ENCODE measurements at regions of chr6 and their contacts with region 1.

Region 1: DNA sequence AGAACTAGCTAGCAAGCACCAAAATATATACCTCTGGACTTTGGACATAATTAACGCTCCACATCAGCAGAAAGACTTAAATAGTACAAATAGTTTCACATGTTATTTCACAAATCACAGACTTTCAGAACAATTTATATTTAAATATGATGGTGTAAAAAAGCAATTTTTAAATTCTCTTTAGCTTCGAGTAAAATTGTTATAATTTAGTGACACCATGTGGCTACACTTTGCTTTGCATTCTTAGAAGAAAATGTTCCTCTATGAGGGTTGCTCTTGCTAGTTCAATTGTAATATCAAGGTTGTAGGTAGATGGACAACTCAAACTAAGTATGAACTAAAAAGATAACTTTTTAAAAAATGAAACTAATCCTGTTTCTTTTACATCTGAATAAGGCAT is 69.0 kb downstream of the BTBD9 start:
- DNase-seq: no peak
- ATAC-seq: no peak
- H3K4me3 Mint-ChIP-seq: no peak overlapping the region
- H3K27ac Mint-ChIP-seq: no peak overlapping the region
- H3K4me1 Mint-ChIP-seq: peaks cover 18% of the 10 kb centered on the region
- H3K27me3 Mint-ChIP-seq: no peaks in the 10 kb centered on the region

Region 2: DNA sequence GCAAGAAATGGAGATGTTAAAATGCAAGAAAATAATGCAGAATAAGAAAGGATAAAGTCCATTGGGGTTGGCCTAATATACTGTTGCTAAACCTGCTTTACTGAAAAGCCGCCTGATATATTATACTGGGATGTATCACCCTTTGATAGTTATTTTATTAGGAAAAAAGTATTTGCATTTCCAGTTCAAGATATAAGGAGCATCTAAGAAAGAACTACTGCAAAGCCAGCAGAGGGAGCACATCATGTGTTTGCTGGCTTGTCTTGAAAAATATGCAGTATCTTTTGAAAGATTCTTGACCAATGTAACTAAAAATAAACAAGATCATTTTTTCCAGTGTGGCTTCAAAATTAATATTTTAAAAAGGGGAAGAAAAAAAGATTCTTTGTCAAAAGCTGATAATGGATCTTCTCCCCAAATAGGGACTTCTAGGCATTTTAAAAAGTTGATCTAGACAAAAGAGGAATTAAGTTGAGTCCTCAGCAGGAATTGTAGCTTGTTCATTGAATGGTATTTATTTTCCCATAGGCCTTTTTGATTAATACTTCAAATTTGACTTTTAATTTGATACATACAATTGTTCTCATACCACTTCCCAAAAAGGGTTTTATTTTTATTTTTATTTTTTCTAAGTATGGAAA is 536.4 kb before region 1 on chr6:
- CTCF ChIA-PET with region 1: interaction called, 16 read pairs
- POLR2A ChIA-PET with region 1: no interaction called
- DNase-seq: no peak
- ATAC-seq: no peak
- H3K4me3 Mint-ChIP-seq: no peak overlapping the region
- H3K27ac Mint-ChIP-seq: no peak overlapping the region
- H3K4me1 Mint-ChIP-seq: peaks cover 12% of the 10 kb centered on the region
- H3K27me3 Mint-ChIP-seq: no peaks in the 10 kb centered on the region

Region 3: GRCh38 chr6:38396209-38396608 is 174.5 kb before region 1 on chr6:
- CTCF ChIA-PET with region 1: no interaction called
- POLR2A ChIA-PET with region 1: no interaction called
- DNase-seq: no peak
- ATAC-seq: no peak
- H3K4me3 Mint-ChIP-seq: no peak overlapping the region
- H3K27ac Mint-ChIP-seq: no peak overlapping the region
- H3K4me1 Mint-ChIP-seq: no peaks in the 10 kb centered on the region
- H3K27me3 Mint-ChIP-seq: no peaks in the 10 kb centered on the region

Region 4: GRCh38 chr6:38554700-38555413 is 15.9 kb before region 1 on chr6:
- CTCF ChIA-PET with region 1: interaction called, 13 read pairs
- POLR2A ChIA-PET with region 1: no interaction called
- DNase-seq: no peak
- ATAC-seq: no peak
- H3K4me3 Mint-ChIP-seq: no peak overlapping the region
- H3K27ac Mint-ChIP-seq: no peak overlapping the region
- H3K4me1 Mint-ChIP-seq: no peaks in the 10 kb centered on the region
- H3K27me3 Mint-ChIP-seq: no peaks in the 10 kb centered on the region

Measured in activated CD8-positive, alpha-beta T cell treated with anti-CD3 and anti-CD28 coated beads, Interleukin-2, amount 10 ng/mL, durations not matched to agents 7 days and 5 days (primary cell).